ENCODE measurements at regions of chr20 and their contacts with region 1.

Region 1: DNA sequence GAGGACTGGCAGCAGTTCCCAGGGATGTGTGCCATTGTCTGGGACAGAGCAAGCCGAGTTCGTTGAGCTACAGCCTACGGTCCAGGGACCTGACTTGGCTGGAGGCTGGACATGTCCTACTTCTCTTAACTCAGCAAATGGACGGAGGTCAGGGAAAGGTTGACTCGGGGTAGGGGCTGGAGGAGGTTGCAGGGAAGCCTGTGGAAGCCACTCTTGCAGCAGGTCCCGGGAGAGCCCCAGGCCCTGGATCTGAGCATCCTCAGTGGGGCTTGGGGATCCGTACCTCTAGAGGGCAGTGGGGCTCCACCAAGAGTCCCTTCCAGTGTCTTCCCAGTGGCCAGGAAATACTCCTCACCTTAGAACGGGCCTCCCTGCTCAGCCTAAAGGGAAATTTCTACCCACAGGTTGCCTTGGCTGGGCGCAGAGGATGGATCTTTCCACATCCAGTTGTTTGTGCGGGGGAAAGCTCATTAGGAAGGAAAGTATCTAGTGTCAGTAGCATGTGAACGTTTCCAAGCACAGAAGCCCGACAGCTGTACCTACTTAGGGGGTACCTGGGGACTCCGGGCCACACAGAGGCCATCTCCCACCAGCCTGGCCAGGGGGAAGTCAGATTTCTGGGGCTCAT is 170.2 kb downstream of the NFATC2 start:
- DNase-seq: peak; percentile 59
- H3K4me3 ChIP-seq: no peak overlapping the region
- H3K27ac ChIP-seq: no peak overlapping the region
- H3K4me1 ChIP-seq: peaks cover 26% of the 10 kb centered on the region
- H3K27me3 ChIP-seq: peaks cover 14% of the 10 kb centered on the region
- CTCF ChIP-seq: peak; percentile 89

Region 2: DNA sequence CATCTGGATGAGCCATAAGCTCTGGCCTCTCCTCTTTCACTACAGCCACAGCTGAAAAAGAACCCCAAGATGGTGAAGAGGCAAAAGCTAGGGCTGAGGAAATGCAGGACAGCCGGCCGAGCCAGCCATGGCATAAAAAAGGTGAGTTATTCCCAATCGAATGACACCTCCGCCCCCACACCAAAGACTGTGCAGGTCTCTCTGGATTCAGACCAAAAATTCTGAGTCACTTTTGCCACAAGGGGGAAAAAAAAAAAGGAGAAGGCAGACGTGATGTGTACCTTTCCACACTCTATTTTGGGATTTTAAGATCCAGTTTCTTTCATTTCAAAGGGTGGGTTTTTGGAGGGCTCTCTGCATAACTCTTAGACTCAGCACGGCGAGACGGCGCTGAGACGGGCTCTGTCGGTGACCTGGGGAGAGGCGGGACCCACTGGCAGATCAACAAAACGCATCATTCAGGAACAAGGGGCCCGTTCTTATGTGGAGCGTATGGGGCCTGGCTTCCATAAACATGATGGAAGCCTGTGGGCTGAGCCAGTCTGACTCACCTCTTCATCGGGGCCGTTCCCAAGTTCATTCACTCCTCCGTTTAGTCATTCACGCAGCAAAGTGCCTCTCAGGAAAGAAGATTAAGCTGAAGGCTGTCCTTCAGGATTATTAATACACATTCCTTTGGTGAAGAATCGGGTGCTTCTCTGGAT is 115.4 kb after region 1 on chr20:
- intact Hi-C with region 1: no loop called
- DNase-seq: no peak
- H3K4me3 ChIP-seq: no peak overlapping the region
- H3K27ac ChIP-seq: no peak overlapping the region
- H3K4me1 ChIP-seq: peaks cover 9% of the 10 kb centered on the region
- H3K27me3 ChIP-seq: no peaks in the 10 kb centered on the region
- CTCF ChIP-seq: no peak

Region 3: DNA sequence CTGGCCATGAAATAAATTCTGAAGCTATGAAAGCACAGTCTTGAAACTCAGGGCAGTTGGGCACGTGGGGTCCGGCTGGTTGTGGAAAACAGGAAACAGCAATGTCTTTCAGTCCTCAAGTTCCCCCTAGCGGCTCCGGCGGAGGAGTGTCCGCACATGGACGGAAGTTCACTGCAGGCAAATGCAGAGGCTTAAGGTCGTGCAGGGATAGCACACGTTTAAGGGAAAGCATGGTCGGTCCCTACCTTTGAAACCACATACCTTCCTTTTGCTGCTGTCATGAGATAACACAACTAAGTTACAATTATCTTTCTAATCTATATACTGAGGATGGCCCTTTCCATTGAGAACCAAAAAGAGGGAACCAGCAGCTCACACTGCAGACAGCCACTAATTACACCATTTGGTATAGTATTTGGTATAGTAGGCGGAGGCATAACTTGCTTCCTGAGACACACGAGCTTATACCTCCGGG is 222.8 kb after region 1 on chr20:
- intact Hi-C with region 1: loop called (anchors 5 kb)
- DNase-seq: peak; percentile 84
- H3K4me3 ChIP-seq: peak overlapping the region; percentile 12
- H3K27ac ChIP-seq: no peak overlapping the region
- H3K4me1 ChIP-seq: peaks cover 4% of the 10 kb centered on the region
- H3K27me3 ChIP-seq: no peaks in the 10 kb centered on the region
- CTCF ChIP-seq: peak; percentile 91

Measured in left ventricle myocardium inferior (tissue), 1 donor.